Thyroid gland (tissue), 4 donors: ENCODE measurements at regions of chr19 and their contacts with region 1.

Region 1: GRCh38 chr19:12527034-12527836 is 24.0 kb downstream of the ZNF564 start:
- DNase-seq: no peak
- H3K4me3 ChIP-seq: no peak overlapping the region
- H3K27ac ChIP-seq: no peak overlapping the region
- H3K4me1 ChIP-seq: no peaks in the 10 kb centered on the region
- H3K27me3 ChIP-seq: no peaks in the 10 kb centered on the region
- CTCF ChIP-seq: no peak
- POLR2A ChIP-seq: no peak

Region 2: DNA sequence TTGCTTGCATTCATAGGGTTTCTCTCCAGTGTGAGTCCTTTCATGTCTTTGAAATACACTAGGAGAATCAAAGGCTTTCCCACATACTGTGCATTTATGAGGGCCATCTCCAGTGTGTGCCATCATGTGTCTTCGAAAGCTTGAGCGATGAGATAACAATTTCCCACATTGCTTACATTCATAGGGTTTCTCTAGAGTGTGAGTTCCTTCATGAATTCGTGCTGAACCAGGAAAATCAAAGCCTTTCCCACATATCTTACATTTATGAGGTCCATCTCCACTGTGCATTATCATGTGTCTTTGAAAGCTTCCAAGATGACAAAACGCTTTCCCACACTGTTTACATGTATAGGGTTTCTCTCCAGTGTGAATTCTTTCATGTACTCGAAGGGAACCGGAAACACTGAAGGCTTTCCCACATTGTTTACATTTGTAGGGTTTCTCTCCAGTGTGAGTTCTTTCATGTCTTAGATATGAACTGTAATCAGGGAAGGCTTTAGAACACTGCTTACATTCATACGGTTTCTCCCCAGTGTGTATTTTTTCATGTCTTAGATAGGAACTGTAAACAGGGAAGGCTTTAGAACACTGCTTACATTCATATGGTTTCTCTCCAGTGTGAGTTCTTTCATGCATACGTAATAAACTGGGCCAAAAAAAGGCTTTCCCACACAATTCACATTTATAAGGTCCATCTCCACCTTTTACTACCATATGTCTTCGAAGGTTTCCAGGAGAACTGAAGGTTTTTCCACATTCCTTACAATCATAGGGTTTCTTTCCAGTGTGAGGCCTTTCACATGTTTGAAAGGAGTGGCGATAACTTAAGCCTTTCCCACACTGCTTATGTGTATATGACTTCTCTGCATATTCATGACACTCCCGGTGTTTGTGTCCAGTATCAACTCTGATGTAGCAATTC is 254.0 kb before region 1 on chr19:
- intact Hi-C with region 1: loop called (anchors 10 kb)
- DNase-seq: no peak
- H3K4me3 ChIP-seq: no peak overlapping the region
- H3K27ac ChIP-seq: no peak overlapping the region
- H3K4me1 ChIP-seq: no peaks in the 10 kb centered on the region
- H3K27me3 ChIP-seq: no peaks in the 10 kb centered on the region
- CTCF ChIP-seq: no peak
- POLR2A ChIP-seq: no peak

Region 3: DNA sequence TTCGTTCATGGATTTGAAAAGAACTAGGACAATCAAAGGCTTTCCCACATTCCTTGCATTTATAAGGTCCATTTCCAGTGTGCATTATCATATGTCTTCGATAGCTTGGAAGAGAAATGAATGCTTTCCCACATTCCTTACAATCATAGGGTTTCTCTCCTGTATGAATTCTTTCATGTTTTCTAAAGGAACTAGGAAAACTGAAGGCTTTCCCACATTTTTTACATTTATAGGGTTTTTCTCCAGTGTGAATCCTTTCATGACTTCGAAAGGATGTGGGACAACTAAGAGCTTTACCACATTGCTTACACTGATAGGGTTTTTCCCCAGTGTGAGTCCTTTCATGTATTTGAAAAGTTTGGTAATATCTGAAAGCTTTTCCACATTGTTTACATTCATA is 62.5 kb before region 1 on chr19:
- intact Hi-C with region 1: loop called (anchors 5 kb)
- DNase-seq: no peak
- H3K4me3 ChIP-seq: no peak overlapping the region
- H3K27ac ChIP-seq: no peak overlapping the region
- H3K4me1 ChIP-seq: no peaks in the 10 kb centered on the region
- H3K27me3 ChIP-seq: no peaks in the 10 kb centered on the region
- CTCF ChIP-seq: no peak
- POLR2A ChIP-seq: no peak

Region 4: DNA sequence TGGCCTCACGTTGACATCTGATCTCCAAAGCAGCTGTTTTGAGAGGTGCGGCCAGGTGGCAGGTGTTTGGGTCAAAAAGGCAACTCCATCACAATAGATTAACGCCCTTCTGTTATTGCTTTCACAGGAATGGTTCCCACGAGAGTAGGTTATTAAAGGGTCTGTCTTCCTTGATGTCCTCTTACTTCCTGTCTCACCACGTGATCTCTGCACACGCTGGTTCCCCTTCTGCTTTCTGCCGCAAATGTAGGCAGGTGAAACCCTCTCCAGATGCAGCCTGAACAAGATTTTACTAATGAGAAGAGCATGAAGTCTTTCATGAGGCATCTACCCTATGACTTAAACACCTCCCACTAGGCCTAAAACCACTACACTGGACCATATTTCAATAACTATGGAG is 46.8 kb after region 1 on chr19:
- intact Hi-C with region 1: no loop called
- DNase-seq: no peak
- H3K4me3 ChIP-seq: no peak overlapping the region
- H3K27ac ChIP-seq: no peak overlapping the region
- H3K4me1 ChIP-seq: no peaks in the 10 kb centered on the region
- H3K27me3 ChIP-seq: no peaks in the 10 kb centered on the region
- CTCF ChIP-seq: no peak
- POLR2A ChIP-seq: no peak

Region 5: GRCh38 chr19:12749938-12750521 is 222.8 kb after region 1 on chr19:
- intact Hi-C with region 1: no loop called
- DNase-seq: no peak
- H3K4me3 ChIP-seq: no peak overlapping the region
- H3K27ac ChIP-seq: no peak overlapping the region
- H3K4me1 ChIP-seq: no peaks in the 10 kb centered on the region
- H3K27me3 ChIP-seq: no peaks in the 10 kb centered on the region
- CTCF ChIP-seq: no peak
- POLR2A ChIP-seq: no peak

Region 6: DNA sequence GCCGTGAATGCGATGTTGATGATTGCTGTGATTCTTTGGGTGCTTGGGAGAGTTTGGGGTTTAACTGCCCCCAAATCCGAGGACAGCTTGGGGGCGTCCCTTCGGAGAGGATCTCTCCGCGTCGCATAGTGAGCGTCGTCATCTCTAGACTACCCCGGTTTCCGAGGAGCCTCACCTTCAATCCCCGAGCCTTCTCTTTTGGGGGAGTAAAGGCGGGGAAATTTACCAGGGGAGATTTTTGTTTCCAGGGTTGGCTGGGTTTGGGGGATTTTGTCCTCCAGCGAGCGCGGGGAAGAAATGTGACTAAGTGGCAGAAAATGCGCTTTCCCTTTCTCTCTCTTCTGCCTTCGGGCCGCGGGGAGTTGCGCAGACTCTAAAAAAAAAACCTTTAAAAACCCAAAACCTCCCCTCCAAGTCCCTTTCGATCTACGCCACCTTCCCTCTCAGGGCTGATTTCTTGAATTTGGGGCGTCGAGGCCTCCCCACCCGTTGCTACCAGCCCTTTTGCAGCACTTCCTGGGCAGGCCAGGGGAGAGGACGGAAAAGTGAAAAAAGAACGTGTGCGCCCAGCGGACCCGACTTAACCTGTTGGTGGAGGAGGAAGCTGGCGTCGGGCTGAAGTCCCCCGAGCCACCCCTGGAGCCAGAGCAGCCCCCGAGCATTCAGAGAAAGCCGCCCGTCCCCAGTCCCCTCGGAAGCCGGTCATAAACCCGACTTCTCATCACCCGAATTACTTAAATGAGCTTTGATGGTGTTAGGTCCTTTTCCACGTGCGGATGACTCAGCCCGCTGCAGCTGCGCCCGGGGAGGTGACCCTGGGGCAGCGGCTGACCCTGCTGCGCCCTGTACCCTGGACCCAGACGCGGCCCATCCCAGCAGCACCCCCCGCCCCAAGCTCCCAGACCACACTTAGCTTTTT is 485.7 kb after region 1 on chr19:
- intact Hi-C with region 1: no loop called
- DNase-seq: no peak
- H3K4me3 ChIP-seq: peak overlapping the region in 1 of 3 donors; percentile 1
- H3K27ac ChIP-seq: peak overlapping the region; percentile 64 to 87 (median 83)
- H3K4me1 ChIP-seq: peaks cover 65 to 86% of the 10 kb centered on the region in 2 donors
- H3K27me3 ChIP-seq: no peaks in the 10 kb centered on the region
- CTCF ChIP-seq: no peak
- POLR2A ChIP-seq: no peak